Calu3 (cell line): ENCODE measurements at regions of chr17 and their contacts with region 1.

Region 1: DNA sequence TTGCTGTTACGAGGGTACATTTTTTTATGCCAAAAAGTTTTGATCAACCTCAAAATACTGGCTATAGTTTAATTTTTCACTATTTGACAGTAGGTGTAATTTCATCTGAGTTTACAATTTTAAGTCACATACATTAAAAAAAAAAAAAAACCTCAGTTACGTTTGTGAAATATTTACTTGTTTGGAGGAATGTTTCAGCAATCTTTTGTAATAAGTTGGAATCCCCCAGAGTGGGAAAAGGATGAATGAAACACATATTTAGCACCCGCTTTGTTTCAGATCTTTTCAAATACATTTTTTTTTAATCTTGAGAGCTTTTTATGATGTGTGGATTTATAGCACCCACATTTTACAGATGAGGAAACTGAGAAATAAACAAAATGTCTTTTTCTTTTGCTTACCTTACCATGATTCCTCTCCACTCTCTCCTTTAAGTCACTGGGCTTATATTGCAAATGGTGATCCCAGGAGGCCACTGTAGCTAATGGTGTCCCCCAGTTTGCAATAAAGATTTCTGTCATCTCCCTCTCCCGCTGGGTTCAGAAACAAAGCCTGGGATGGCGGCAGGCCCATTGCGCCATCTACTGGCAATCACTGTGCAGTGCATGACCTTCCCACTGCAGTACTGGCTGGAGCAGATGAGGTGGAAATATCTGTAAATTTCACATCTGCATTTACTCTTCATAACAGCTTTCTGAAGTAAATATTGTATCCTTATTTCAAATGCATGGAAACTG is 27.7 kb downstream of the TBC1D3B start:
- DNase-seq: peak; percentile 73
- H3K4me3 Mint-ChIP-seq: no peak overlapping the region
- H3K27ac Mint-ChIP-seq: no peak overlapping the region
- H3K4me1 Mint-ChIP-seq: no peaks in the 10 kb centered on the region
- H3K27me3 Mint-ChIP-seq: peaks cover 90% of the 10 kb centered on the region
- CTCF ChIP-seq: peak; percentile 92

Region 2: DNA sequence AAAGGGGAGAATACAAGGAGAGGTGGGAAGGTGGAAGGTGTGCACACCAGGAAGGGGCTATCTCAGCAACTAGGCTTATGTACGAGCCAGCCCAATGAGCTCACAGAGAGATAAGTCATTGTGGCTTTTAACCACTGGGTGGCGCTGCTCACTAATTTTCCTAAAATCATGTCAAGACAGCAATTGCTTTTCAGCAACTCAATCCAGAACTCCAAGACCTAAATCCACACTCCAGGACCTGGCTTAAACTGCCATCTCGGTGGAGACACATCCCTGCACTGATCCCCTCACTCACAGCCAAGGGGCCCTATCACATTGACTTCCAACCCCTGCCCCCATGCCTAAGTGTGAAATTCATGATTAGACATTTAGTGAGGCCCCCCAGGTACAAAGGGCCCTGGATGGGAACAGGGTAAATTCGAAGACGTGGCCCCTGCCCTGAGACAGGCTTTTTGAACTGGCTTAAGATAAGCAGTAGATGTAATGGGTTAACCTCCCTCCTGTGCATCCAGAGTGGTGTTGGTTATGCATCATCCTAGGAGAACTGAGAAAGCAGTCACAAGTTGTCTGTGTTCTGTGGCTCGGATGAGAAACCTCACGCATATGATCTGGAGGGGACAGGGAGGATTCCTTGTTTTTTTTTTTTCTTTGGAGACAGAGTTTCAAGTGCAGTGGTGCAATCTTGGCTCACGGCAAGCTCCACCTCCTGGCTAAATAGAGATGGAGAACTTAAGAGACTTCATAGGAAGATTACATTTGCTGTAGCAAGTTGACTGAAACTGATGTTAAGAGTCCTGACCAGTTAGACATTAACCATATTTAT is 179.0 kb before region 1 on chr17:
- CTCF ChIA-PET with region 1: interaction called, 20 read pairs
- intact Hi-C with region 1: loop called (anchors 1 kb)
- DNase-seq: peak; percentile 77
- H3K4me3 Mint-ChIP-seq: no peak overlapping the region
- H3K27ac Mint-ChIP-seq: no peak overlapping the region
- H3K4me1 Mint-ChIP-seq: peaks cover 11% of the 10 kb centered on the region
- H3K27me3 Mint-ChIP-seq: peaks cover 27% of the 10 kb centered on the region
- CTCF ChIP-seq: peak; percentile 75

Region 3: DNA sequence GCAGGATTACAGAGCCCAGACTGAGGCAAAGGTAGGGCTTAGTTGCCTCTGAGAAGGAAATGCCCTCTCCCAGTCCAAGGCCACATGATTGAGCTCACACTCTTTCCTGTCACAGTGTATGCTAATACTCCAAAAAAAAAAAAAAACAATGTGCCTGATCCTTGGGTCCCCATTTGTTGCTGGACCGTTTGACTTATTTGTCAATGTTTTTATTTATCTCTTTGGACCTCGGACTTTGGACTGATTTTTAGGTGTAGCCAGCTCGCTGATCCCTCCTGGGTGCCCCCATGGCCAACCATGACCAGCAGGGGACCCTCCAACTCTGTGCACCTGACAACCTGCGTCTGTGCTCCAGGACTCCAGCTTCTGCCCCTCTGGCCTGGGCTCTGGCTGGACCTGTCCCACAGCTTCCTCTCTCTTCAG is 166.8 kb before region 1 on chr17:
- CTCF ChIA-PET with region 1: interaction called, 18 read pairs
- intact Hi-C with region 1: no loop called
- DNase-seq: peak; percentile 46
- H3K4me3 Mint-ChIP-seq: no peak overlapping the region
- H3K27ac Mint-ChIP-seq: no peak overlapping the region
- H3K4me1 Mint-ChIP-seq: no peaks in the 10 kb centered on the region
- H3K27me3 Mint-ChIP-seq: peaks cover 94% of the 10 kb centered on the region
- CTCF ChIP-seq: no peak

Region 4: DNA sequence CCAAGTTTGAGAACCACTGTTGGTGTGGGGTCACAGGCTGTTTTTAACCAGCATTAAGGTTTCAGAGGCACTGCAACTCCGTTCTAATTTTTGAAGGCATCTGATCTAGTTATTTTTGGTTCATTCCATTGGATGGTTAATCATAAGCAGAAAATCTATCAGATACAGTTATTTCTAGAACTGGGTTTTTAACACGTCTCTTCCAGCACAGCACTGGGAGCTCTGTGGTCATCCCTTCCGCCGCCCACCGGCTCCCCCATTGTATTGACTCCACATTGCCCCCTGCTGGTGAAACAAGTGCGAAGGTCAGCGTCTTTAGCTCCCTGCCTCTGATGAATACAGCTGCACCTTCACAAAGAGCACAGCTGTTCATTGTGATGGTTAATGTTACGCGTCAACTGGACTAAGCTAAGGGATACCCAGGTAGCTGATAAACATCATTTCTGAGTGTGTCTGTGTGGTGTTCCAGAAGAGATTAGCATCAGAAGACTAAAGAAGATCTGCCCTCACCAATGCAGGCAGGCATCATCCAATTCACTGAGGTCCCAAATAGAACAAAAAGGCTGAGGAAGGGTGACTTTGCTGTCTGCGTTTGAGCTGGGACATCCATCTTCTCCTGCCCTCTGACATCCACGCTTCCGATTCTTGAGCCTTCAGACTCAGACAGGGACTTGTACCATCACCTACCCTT is 76.2 kb before region 1 on chr17:
- CTCF ChIA-PET with region 1: no interaction called
- intact Hi-C with region 1: no loop called
- DNase-seq: peak; percentile 76
- H3K4me3 Mint-ChIP-seq: no peak overlapping the region
- H3K27ac Mint-ChIP-seq: no peak overlapping the region
- H3K4me1 Mint-ChIP-seq: no peaks in the 10 kb centered on the region
- H3K27me3 Mint-ChIP-seq: peaks cover 64% of the 10 kb centered on the region
- CTCF ChIP-seq: peak; percentile 77

Region 5: DNA sequence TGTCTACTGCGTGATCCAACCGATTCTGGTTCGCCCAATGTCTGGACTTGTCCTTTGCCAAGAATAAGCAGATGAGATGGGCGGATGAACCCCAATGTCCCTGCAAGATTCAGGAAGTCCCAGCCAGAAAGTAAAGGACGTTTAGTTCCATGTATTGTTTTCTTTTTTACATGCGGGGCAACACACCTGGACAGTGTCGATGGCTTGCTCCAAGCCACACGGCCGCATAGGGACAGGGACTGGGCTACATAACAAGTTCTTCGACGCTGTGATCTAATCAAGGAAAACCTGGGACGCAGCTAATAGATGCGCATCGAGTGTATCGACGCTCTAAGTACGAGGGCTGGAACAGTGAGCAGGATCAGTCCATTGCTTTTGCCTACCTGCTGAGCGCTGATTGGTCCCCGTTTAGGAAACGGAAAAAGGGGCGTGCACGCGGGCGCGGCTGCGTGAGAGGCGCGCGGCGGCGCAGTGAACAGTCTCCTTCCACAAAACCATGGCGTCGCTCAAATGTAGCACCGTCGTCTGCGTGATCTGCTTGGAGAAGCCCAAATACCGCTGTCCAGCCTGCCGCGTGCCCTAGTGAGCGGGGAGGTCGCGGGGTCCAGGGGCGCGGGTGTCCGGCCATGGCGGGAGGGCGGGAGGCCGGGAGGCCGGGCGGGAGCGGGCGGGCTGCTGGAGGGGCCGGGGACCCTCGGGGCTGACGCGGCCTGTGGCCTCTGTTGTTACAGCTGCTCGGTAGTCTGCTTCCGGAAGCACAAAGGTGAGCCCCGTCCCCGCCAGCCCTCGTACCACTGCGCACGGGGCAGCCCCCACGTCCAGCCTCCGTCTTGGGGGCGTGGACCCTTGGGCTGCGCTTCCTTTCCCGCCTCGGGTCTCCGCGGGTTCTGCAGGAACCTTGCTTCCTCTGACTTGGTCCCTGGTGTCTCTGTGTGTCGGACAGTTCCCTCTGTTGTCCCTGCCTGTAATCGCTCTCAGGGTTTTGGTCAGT is 337.8 kb after region 1 on chr17 and contains the start of gene ZNHIT3:
- CTCF ChIA-PET with region 1: interaction called, 3 read pairs
- intact Hi-C with region 1: loop called (anchors 10 kb)
- DNase-seq: peak; percentile 86
- H3K4me3 Mint-ChIP-seq: peak within 1 kb of the TSS; percentile 91
- H3K27ac Mint-ChIP-seq: peak within 1 kb of the TSS; percentile 95
- H3K4me1 Mint-ChIP-seq: peaks cover 9% of the 10 kb centered on the region
- H3K27me3 Mint-ChIP-seq: peaks cover 14% of the 10 kb centered on the region
- CTCF ChIP-seq: no peak
- total RNA-seq, gene ZNHIT3: 32.6 and 33.6 TPM in 2 replicates